HCT116 (cell line): ENCODE measurements at regions of chr1 and their contacts with region 1.

Region 1: GRCh38 chr1:222455188-222455879 is 92.6 kb downstream of the HHIPL2 start:
- DNase-seq: peak; percentile 64
- ATAC-seq: peak; percentile 98
- H3K4me3 ChIP-seq: no peak overlapping the region
- H3K27ac ChIP-seq: no peak overlapping the region
- H3K4me1 ChIP-seq: peaks cover 0 to 5% of the 10 kb centered on the region in 2 experiments; a peak in 1 of 4 replicates
- H3K27me3 ChIP-seq: no peaks in the 10 kb centered on the region
- CTCF ChIP-seq: peak; percentile 88 to 97 (median 94)
- POLR2A ChIP-seq: no peak
- RAD21 ChIP-seq: peak; percentile 98

Region 2: DNA sequence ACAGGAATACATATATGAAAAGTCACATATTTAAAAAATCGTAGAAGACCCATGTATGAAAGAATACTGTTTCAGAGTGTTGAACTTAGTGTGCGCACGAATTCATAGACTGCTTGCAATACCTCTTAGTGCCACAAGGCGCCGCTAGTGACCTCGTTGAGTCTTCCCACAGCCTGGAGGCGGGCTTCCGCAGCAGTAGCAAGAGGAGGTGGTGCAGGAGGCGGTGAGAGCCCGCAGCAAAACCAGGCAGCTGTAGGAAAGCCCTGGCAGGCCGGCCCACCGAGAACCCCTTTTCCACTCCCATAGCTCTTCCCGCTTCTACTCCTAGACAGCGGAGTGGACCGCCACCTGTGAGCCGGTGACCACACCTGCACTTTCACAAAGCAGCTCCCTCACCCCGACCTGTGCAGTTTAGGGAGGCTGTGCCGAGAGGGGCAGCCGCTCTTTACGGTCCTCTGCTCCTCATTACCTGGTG is 1645.1 kb before region 1 on chr1:
- CTCF ChIA-PET with region 1: no interaction called
- POLR2A ChIA-PET with region 1: no interaction called
- RAD21 ChIA-PET with region 1: no interaction called
- intact Hi-C with region 1: loop called (anchors 2 kb)
- DNase-seq: peak; percentile 38
- ATAC-seq: peak; percentile 95
- H3K4me3 ChIP-seq: no peak overlapping the region
- H3K27ac ChIP-seq: no peak overlapping the region
- H3K4me1 ChIP-seq: no peaks in the 10 kb centered on the region; a peak in 1 of 4 replicates
- H3K27me3 ChIP-seq: no peaks in the 10 kb centered on the region
- CTCF ChIP-seq: peak; percentile 66 to 87 (median 85)
- POLR2A ChIP-seq: no peak
- RAD21 ChIP-seq: peak; percentile 78

Region 3: GRCh38 chr1:221263831-221264767 is 1191.2 kb before region 1 on chr1:
- CTCF ChIA-PET with region 1: interaction called, 12 read pairs
- POLR2A ChIA-PET with region 1: no interaction called
- RAD21 ChIA-PET with region 1: no interaction called
- intact Hi-C with region 1: loop called (anchors 5 kb)
- DNase-seq: peak; percentile 75
- ATAC-seq: peak; percentile 92
- H3K4me3 ChIP-seq: no peak overlapping the region
- H3K27ac ChIP-seq: no peak overlapping the region
- H3K4me1 ChIP-seq: no peaks in the 10 kb centered on the region
- H3K27me3 ChIP-seq: no peaks in the 10 kb centered on the region
- CTCF ChIP-seq: peak; percentile 54 to 67 (median 55); a peak in 5 of 6 replicates
- POLR2A ChIP-seq: no peak
- RAD21 ChIP-seq: peak; percentile 66

Region 4: DNA sequence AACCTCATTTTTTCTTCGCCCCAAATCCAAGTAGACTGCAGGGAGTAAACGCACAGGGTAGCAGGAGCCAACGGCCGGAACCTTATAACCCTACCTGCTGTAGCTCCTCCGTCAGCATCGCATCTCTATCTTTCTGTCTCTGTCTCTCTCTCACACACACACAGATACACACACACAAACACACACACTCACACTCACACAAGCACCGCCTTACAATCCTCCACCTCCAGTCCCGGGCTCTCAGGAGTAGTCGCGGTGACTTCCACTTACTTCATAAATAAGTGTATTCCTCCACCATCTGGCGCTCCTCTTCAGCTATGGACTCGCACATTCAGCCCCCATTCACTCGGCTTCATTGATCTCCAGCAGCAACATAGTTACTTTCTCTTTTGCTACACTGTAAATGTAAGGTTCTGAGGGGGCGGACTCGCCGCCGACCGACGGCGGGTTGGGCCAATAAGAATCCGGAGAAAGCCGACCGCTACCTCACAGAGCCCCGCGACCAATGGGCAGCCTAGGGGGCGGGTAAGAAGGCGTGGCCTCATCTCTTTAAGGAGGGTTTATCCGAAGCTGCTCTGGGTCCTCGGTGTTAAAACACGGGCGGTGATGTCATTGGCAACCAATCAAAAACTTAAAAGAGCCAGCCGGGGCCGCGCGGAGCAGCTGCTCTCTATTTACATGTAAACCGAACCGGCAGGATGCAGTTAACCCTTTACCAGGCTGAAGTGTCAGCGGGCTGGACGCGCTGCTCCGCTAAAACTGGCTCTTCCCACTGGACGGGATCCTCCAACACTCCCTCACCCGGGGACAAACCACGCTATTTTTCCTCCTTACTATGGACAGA is 713.4 kb before region 1 on chr1 and contains the start of gene DUSP10:
- CTCF ChIA-PET with region 1: interaction called, 4 read pairs
- POLR2A ChIA-PET with region 1: no interaction called
- RAD21 ChIA-PET with region 1: no interaction called
- intact Hi-C with region 1: loop called (anchors 5 kb)
- DNase-seq: peak; percentile 97
- ATAC-seq: peak; percentile 92
- H3K4me3 ChIP-seq: peak within 1 kb of the TSS; percentile 74 to 76
- H3K27ac ChIP-seq: peak within 1 kb of the TSS; percentile 83
- H3K4me1 ChIP-seq: peaks cover 5 to 20% of the 10 kb centered on the region in 2 experiments; a peak in 3 of 4 replicates
- H3K27me3 ChIP-seq: no peaks in the 10 kb centered on the region
- CTCF ChIP-seq: no peak
- POLR2A ChIP-seq: no peak
- RAD21 ChIP-seq: no peak
- total RNA-seq, gene DUSP10: 1.7 TPM

Region 5: GRCh38 chr1:222095606-222096475 is 359.5 kb before region 1 on chr1:
- CTCF ChIA-PET with region 1: interaction called, 16 read pairs
- POLR2A ChIA-PET with region 1: no interaction called
- RAD21 ChIA-PET with region 1: no interaction called
- intact Hi-C with region 1: loop called (anchors 1 kb)
- DNase-seq: peak; percentile 31
- ATAC-seq: peak; percentile 96
- H3K4me3 ChIP-seq: no peak overlapping the region
- H3K27ac ChIP-seq: no peak overlapping the region
- H3K4me1 ChIP-seq: peaks cover 0 to 3% of the 10 kb centered on the region in 2 experiments; a peak in 1 of 4 replicates
- H3K27me3 ChIP-seq: no peaks in the 10 kb centered on the region
- CTCF ChIP-seq: peak; percentile 47 to 96 (median 96); a peak in 5 of 6 replicates
- POLR2A ChIP-seq: no peak
- RAD21 ChIP-seq: peak; percentile 64

Region 6: GRCh38 chr1:222210776-222211175 is 244.6 kb before region 1 on chr1:
- CTCF ChIA-PET with region 1: interaction called, 16 read pairs
- POLR2A ChIA-PET with region 1: no interaction called
- RAD21 ChIA-PET with region 1: no interaction called
- intact Hi-C with region 1: no loop called
- DNase-seq: no peak
- ATAC-seq: no peak
- H3K4me3 ChIP-seq: no peak overlapping the region
- H3K27ac ChIP-seq: no peak overlapping the region
- H3K4me1 ChIP-seq: no peaks in the 10 kb centered on the region
- H3K27me3 ChIP-seq: no peaks in the 10 kb centered on the region
- CTCF ChIP-seq: no peak
- POLR2A ChIP-seq: no peak
- RAD21 ChIP-seq: no peak

Region 7: GRCh38 chr1:222706815-222707214 is 251.5 kb after region 1 on chr1:
- CTCF ChIA-PET with region 1: no interaction called
- POLR2A ChIA-PET with region 1: no interaction called
- RAD21 ChIA-PET with region 1: no interaction called
- intact Hi-C with region 1: no loop called
- DNase-seq: no peak
- ATAC-seq: no peak
- H3K4me3 ChIP-seq: no peak overlapping the region
- H3K27ac ChIP-seq: no peak overlapping the region
- H3K4me1 ChIP-seq: peaks cover 0 to 8% of the 10 kb centered on the region in 2 experiments; a peak in 2 of 4 replicates
- H3K27me3 ChIP-seq: no peaks in the 10 kb centered on the region
- CTCF ChIP-seq: peak in 2 of 3 experiments; percentile 19 to 40; a peak in 3 of 6 replicates
- POLR2A ChIP-seq: no peak
- RAD21 ChIP-seq: no peak